ENCODE measurements at regions of chr4 and their contacts with region 1.

Region 1: DNA sequence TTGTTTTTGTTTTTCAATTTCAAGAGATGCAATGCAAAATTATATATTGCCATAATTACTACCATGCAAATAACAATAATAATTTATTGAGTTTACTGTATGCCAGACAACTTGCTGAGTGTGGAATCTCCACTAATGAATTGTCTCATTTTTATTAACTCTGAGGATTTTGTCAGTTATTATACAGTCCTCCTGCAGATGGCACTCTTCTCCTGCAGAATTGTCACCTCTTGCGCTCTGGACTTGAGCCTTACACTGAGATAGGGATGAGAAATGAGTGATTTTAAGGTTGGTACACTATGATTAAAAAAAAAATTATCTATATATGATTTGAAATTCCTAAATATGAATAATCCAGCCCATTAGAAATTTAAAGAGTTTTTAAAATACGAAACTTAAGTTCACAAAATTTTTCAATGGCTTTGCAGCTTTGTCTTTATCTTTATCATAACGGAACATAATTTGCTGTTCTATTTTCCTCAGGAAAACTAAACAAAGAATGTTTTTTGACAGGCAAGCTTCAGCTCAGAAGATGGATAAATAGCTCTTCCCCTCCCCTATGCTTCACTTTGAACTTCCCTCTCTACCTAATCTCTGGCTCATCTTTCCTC is 12.7 kb upstream of the PAQR3 start:
- DNase-seq: peak; percentile 23
- H3K4me3 ChIP-seq: no peak overlapping the region
- H3K27ac ChIP-seq: no peak overlapping the region
- H3K4me1 ChIP-seq: no peaks in the 10 kb centered on the region
- H3K27me3 ChIP-seq: no peaks in the 10 kb centered on the region
- CTCF ChIP-seq: peak; percentile 56

Region 2: GRCh38 chr4:78464265-78464664 is 487.7 kb before region 1 on chr4:
- CTCF ChIA-PET with region 1: no interaction called
- POLR2A ChIA-PET with region 1: no interaction called
- intact Hi-C with region 1: no loop called
- DNase-seq: no peak
- H3K4me3 ChIP-seq: no peak overlapping the region
- H3K27ac ChIP-seq: no peak overlapping the region
- H3K4me1 ChIP-seq: no peaks in the 10 kb centered on the region
- H3K27me3 ChIP-seq: no peaks in the 10 kb centered on the region
- CTCF ChIP-seq: no peak

Region 3: GRCh38 chr4:78766650-78767049 is 185.3 kb before region 1 on chr4:
- CTCF ChIA-PET with region 1: no interaction called
- POLR2A ChIA-PET with region 1: no interaction called
- intact Hi-C with region 1: no loop called
- DNase-seq: no peak
- H3K4me3 ChIP-seq: no peak overlapping the region
- H3K27ac ChIP-seq: no peak overlapping the region
- H3K4me1 ChIP-seq: no peaks in the 10 kb centered on the region
- H3K27me3 ChIP-seq: no peaks in the 10 kb centered on the region
- CTCF ChIP-seq: no peak

Region 4: GRCh38 chr4:79134767-79135166 is 182.8 kb after region 1 on chr4:
- CTCF ChIA-PET with region 1: no interaction called
- POLR2A ChIA-PET with region 1: no interaction called
- intact Hi-C with region 1: no loop called
- DNase-seq: no peak
- H3K4me3 ChIP-seq: no peak overlapping the region
- H3K27ac ChIP-seq: no peak overlapping the region
- H3K4me1 ChIP-seq: no peaks in the 10 kb centered on the region
- H3K27me3 ChIP-seq: no peaks in the 10 kb centered on the region
- CTCF ChIP-seq: no peak

Region 5: GRCh38 chr4:79576429-79576753 is 624.4 kb after region 1 on chr4:
- CTCF ChIA-PET with region 1: no interaction called
- POLR2A ChIA-PET with region 1: no interaction called
- intact Hi-C with region 1: loop called (anchors 5 kb)
- DNase-seq: peak; percentile 28
- H3K4me3 ChIP-seq: no peak overlapping the region
- H3K27ac ChIP-seq: no peak overlapping the region
- H3K4me1 ChIP-seq: no peaks in the 10 kb centered on the region
- H3K27me3 ChIP-seq: no peaks in the 10 kb centered on the region
- CTCF ChIP-seq: peak; percentile 53

Region 6: GRCh38 chr4:79854856-79855502 is 903.0 kb after region 1 on chr4:
- CTCF ChIA-PET with region 1: no interaction called
- POLR2A ChIA-PET with region 1: no interaction called
- intact Hi-C with region 1: no loop called
- DNase-seq: no peak
- H3K4me3 ChIP-seq: no peak overlapping the region
- H3K27ac ChIP-seq: no peak overlapping the region
- H3K4me1 ChIP-seq: no peaks in the 10 kb centered on the region
- H3K27me3 ChIP-seq: no peaks in the 10 kb centered on the region
- CTCF ChIP-seq: no peak

Region 7: DNA sequence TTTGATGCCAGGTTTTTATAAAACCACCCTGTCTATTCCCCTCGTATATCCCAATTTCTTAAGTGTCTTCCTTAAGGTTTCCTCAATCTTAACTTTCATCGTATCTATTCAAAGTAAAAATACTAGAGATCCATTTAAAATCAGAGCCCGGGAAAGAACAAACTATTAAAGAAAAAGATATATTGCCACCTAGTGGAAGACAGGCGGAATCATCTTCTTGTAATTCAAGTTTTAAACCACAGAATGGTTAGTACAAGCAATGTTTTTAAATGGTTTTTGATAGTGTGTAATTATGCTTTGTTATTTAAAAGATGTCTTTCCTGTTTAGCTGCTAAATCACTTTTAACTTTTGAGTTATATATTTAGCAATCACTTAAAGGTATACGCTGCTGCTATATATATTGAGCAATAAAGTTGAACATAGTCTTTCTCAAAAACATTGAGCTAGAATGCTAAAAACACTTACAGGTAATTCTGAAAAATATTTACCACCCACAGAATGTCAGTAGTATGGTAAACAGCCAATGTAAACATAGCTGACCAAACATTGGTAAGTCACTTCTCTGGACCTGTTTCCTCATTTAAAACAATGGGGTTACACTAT is 1263.6 kb after region 1 on chr4:
- CTCF ChIA-PET with region 1: no interaction called
- POLR2A ChIA-PET with region 1: no interaction called
- intact Hi-C with region 1: loop called (anchors 5 kb)
- DNase-seq: peak; percentile 23
- H3K4me3 ChIP-seq: no peak overlapping the region
- H3K27ac ChIP-seq: no peak overlapping the region
- H3K4me1 ChIP-seq: no peaks in the 10 kb centered on the region
- H3K27me3 ChIP-seq: peaks cover 20% of the 10 kb centered on the region
- CTCF ChIP-seq: peak; percentile 53

Measured in A673 (cell line).